Heart right ventricle (tissue), 16 donors: ENCODE measurements at regions of chr17 and their contacts with region 1.

Region 1: GRCh38 chr17:83079352-83079747 is at the start of gene METRNL:
- DNase-seq: peak; percentile 77 to 81
- ATAC-seq: peak; percentile 29 to 74 (median 58)
- H3K4me3 ChIP-seq: peak within 1 kb of the TSS; percentile 53 to 96 (median 74)
- H3K27ac ChIP-seq: peak within 1 kb of the TSS; percentile 73 to 97 (median 86)
- H3K4me1 ChIP-seq: peaks cover 17 to 53% (median 40%) of the 10 kb centered on the region in 9 donors
- H3K27me3 ChIP-seq: peaks cover 0 to 28% (median 0%) of the 10 kb centered on the region in 7 donors
- CTCF ChIP-seq: no peak
- total RNA-seq, gene METRNL: 56.0 to 90.1 (median 70.9) TPM

Region 2: GRCh38 chr17:83051395-83052233 is 27.7 kb before region 1 on chr17:
- intact Hi-C with region 1: loop called in 2 of 10 experiments (anchors 2 kb)
- DNase-seq: peak; percentile 96 to 98
- ATAC-seq: peak; percentile 97 to 99 (median 98)
- H3K4me3 ChIP-seq: peak overlapping the region; percentile 52 to 98 (median 82)
- H3K27ac ChIP-seq: peak overlapping the region; percentile 70 to 96 (median 86)
- H3K4me1 ChIP-seq: peaks cover 4 to 67% (median 27%) of the 10 kb centered on the region in 9 donors
- H3K27me3 ChIP-seq: no peaks in the 10 kb centered on the region
- CTCF ChIP-seq: peak in 3 of 9 donors; percentile 15 to 22 (median 20)

Region 3: DNA sequence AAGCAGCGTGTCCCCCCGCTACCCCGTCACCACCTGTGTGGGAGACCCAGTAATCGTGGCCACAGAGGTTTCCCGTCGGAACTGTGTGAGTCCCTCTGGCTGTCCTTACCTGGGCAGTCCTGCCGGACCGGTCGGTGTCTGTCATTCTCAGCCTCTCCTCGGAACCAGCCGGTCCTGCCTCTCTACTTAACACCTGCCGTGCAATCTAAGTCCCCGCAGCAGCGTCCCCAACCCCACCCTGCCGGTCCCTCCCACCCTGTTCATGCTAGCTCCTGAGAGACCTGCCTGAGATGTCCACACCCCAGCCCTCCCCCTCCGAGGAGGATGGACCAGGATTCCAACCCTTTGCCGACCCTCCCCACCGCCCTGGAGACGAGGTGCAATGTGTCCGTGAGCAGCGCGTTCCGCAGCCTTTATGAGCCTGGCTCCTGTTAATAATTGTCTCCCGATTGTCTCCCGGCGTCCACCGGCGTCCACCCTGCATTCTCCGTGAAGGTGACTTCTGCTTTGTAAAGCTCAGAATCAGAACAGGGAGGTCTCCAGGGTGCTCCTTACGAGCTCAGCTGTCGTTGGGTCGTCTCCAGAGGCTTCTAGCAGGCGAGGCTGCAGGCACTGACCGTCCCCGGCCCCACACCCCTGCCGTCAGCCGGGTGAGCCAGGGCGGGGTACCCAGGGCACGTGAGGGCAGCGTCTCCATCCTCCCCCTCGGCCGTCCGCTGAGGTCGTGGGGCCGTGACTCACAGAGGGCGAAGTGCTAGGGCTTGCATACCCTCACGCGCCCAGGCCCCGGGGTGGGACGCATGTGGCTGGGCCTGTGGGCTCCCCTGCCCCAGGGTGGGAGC is 10.2 kb after region 1 on chr17:
- intact Hi-C with region 1: no loop called
- DNase-seq: no peak
- ATAC-seq: peak in 4 of 8 donors; percentile 10 to 25 (median 17)
- H3K4me3 ChIP-seq: no peak overlapping the region
- H3K27ac ChIP-seq: peak overlapping the region in 4 of 10 donors; percentile 4 to 45 (median 15)
- H3K4me1 ChIP-seq: peaks cover 15 to 75% (median 55%) of the 10 kb centered on the region in 9 donors
- H3K27me3 ChIP-seq: no peaks in the 10 kb centered on the region
- CTCF ChIP-seq: no peak

Region 4: DNA sequence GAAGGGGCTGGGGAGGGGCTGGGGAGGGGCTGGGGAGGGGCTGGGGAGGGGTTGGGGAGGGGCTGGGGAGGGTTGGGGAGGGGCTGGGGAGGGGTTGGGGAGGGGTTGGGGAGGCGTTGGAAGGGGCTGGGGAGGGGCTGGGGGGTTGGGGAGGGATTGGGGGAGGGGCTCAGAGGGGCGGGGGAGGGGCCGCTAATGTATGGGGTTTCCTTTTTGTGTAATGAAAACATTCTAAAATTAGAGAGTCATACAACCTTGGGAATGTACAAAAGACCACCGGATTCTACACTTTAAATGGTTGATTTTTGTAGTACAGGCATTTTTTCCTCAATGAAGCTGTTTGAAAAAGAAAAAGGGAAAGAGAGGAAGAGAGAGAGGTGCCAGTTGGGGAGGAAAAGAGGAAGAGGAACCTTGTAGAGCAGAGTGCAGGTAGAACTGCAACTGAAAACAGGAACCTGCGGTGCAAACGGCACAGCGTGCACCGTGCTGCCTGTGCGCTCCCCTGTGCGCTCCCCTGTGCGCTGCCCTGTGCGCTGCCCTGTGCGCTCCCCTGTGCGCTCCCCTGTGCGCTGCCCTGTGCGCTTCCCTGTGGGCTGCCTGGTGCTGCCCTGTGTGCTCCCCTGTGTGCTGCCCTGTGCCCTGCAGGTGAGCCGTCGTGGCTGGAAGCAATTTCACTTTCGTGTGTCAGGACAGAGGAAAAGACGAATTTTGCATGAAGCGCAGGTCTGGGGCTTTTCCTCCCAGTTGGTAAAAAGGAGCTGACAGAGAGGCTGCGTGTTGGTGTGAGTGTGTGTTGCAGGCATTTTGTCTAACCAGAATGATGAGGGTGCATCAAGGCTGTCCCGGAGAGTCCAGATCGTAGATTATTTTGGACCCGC is 40.9 kb after region 1 on chr17:
- intact Hi-C with region 1: loop called in 1 of 10 experiments (anchors 5 kb)
- DNase-seq: no peak
- ATAC-seq: peak in 1 of 8 donors; percentile 25
- H3K4me3 ChIP-seq: no peak overlapping the region
- H3K27ac ChIP-seq: no peak overlapping the region
- H3K4me1 ChIP-seq: peaks cover 0 to 27% (median 7%) of the 10 kb centered on the region in 9 donors
- H3K27me3 ChIP-seq: peaks cover 0 to 17% (median 4%) of the 10 kb centered on the region in 7 donors
- CTCF ChIP-seq: no peak

Region 5: DNA sequence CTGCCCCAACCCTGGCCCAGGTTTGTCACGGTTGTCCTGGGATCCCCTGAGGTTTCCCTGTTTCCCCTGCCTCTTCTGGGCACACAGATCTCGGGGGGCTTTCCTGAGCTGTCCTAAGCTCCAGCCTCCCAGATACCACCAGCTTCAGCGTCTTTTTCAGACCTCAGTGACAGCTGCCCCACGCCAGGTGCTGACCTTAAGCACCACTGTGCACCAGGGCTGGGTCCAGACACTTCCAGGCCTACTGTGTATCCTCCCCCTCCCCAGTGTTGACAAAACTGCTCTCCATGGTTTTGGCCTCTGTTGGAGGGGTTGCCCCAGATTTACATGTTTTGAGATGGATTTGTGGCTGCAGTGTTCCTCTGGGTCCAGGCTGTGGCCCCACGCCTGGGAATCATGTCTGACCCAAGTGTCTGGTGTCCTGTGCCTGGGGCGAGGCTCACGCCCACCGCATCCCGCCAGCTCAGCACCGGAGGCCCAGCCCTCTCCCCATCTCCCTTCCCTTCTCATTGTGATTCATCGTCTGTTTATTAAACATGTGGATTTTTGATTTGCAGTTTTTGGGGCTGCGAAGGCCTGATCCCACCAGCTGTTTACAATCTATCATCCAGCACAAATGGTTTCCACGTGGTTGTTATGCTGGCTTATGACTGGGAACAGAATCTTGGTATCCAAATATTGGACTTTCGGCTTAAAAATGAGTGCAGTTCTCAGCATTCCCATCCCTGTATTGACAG is 82.1 kb after region 1 on chr17:
- intact Hi-C with region 1: no loop called
- DNase-seq: no peak
- ATAC-seq: peak in 3 of 8 donors; percentile 14 to 33 (median 24)
- H3K4me3 ChIP-seq: no peak overlapping the region
- H3K27ac ChIP-seq: no peak overlapping the region
- H3K4me1 ChIP-seq: no peaks in the 10 kb centered on the region
- H3K27me3 ChIP-seq: peaks cover 0 to 8% (median 0%) of the 10 kb centered on the region in 7 donors
- CTCF ChIP-seq: no peak